Activated CD8-positive, alpha-beta T cell treated with anti-CD3 and anti-CD28 coated beads for 36 hours (primary cell): ENCODE measurements at regions of chr4 and their contacts with region 1.

Region 1: GRCh38 chr4:25913851-25914669 is at the start of gene SMIM20:
- DNase-seq: peak; percentile 92
- ATAC-seq: peak; percentile 95
- H3K4me3 Mint-ChIP-seq: peak within 1 kb of the TSS; percentile 97
- H3K27ac Mint-ChIP-seq: peak within 1 kb of the TSS; percentile 98
- H3K4me1 Mint-ChIP-seq: peaks cover 16% of the 10 kb centered on the region
- H3K27me3 Mint-ChIP-seq: no peaks in the 10 kb centered on the region
- CTCF ChIP-seq: no peak
- total RNA-seq, gene SMIM20: 21.3 to 26.9 TPM

Region 2: DNA sequence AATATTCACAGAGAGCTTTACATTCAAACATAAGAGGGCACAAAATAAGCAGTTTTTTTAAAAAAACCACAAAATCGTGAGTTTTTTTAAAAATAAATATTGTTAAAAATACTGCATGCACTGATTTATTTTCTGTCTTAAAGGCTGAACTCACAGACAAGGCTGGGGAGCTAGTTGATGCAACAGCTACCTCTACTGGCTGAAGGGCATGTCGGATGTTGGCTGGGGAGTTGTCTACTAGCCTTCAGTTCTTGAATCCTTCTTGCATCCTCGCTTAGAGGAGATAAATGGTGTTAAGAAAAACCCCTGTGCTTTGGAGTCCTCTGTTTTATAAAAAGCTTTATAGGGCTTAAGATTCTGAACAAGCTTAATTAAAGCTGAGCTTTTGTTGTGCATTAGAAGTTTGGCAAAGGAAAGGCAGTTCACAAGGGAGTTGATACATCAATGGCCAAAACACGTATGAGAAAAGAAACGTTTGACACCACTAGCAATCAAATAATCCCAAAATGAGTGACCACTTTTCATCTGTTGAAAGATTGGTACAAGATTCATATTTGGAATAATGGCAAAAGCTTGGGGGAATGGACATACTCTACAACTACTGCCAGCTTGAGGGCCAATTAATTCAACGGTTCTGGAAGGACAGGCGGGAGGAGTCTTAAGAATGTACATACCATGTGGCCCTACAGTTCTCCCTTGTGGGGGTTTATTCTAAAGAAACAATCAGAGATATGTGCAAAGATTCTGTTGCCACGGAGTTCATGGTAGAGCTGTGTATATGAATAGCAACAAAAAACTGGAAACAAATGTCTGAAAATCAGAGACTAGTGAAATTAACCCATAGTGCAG is 146.0 kb before region 1 on chr4:
- CTCF ChIA-PET with region 1: no interaction called
- POLR2A ChIA-PET with region 1: no interaction called
- intact Hi-C with region 1: no loop called
- DNase-seq: peak; percentile 45
- ATAC-seq: no peak
- H3K4me3 Mint-ChIP-seq: no peak overlapping the region
- H3K27ac Mint-ChIP-seq: no peak overlapping the region
- H3K4me1 Mint-ChIP-seq: no peaks in the 10 kb centered on the region
- H3K27me3 Mint-ChIP-seq: no peaks in the 10 kb centered on the region
- CTCF ChIP-seq: peak; percentile 34

Region 3: DNA sequence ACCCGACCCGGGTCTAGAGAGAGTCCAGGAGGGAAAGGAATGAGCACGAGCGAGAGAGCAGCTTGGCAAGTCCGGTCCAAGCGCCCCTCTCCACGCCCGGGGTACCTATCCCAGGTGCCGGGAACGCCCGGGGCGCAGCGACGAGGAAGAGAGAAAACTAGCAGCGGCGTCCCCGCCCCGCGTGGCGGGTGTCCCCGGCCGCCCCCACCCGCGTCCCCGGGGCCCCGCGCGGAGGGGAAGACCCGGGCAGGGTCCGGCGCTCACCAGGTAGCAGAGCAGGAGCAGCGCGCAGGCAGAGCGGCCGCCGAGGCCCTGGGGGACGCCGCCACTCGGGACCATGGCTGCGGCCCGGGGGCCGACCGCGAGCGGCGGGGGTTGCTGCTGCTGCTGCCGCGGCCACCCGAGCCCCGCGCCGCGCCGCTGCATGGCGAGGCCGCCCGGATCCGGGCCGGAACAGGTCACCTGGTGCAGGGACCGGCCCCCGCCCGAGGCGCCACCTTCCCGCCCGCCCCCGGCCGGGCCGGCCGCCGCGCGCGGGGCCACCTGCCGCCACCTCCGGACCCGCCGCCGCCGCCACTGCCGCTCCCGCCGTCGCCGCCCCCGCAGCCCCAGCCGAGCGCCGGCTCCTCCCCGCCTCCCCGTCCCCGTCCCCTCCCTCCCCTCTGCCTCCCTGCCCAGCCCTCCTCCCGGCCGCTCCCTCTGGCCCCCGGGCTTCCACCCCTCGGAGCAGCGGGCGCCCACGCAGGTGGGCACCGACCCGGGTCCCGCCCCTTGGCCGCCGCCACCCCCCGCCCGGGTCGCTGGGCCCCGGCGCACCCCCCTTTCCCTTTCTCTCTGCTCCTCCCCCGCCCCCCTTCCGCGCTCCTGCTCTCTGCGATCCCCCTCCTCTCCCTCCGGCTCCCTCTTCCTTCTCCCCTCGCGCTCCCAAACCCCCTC is 51.4 kb before region 1 on chr4 and contains the start of gene SEL1L3:
- CTCF ChIA-PET with region 1: interaction called, 3 read pairs
- POLR2A ChIA-PET with region 1: interaction called, 7 read pairs
- intact Hi-C with region 1: loop called (anchors 5 kb)
- DNase-seq: peak; percentile 60
- ATAC-seq: peak; percentile 43
- H3K4me3 Mint-ChIP-seq: peak within 1 kb of the TSS; percentile 99
- H3K27ac Mint-ChIP-seq: peak within 1 kb of the TSS; percentile 98
- H3K4me1 Mint-ChIP-seq: peaks cover 40% of the 10 kb centered on the region
- H3K27me3 Mint-ChIP-seq: no peaks in the 10 kb centered on the region
- CTCF ChIP-seq: no peak
- total RNA-seq, gene SEL1L3: 34.8 to 36.9 TPM

Region 4: GRCh38 chr4:25884031-25884782 is 29.9 kb before region 1 on chr4:
- CTCF ChIA-PET with region 1: no interaction called
- POLR2A ChIA-PET with region 1: no interaction called
- intact Hi-C with region 1: no loop called
- DNase-seq: no peak
- ATAC-seq: peak; percentile 45
- H3K4me3 Mint-ChIP-seq: no peak overlapping the region
- H3K27ac Mint-ChIP-seq: no peak overlapping the region
- H3K4me1 Mint-ChIP-seq: peaks cover 3% of the 10 kb centered on the region
- H3K27me3 Mint-ChIP-seq: peaks cover 12% of the 10 kb centered on the region
- CTCF ChIP-seq: no peak